SK-N-SH (cell line): ENCODE measurements at regions of chr6 and their contacts with region 1.

Region 1: DNA sequence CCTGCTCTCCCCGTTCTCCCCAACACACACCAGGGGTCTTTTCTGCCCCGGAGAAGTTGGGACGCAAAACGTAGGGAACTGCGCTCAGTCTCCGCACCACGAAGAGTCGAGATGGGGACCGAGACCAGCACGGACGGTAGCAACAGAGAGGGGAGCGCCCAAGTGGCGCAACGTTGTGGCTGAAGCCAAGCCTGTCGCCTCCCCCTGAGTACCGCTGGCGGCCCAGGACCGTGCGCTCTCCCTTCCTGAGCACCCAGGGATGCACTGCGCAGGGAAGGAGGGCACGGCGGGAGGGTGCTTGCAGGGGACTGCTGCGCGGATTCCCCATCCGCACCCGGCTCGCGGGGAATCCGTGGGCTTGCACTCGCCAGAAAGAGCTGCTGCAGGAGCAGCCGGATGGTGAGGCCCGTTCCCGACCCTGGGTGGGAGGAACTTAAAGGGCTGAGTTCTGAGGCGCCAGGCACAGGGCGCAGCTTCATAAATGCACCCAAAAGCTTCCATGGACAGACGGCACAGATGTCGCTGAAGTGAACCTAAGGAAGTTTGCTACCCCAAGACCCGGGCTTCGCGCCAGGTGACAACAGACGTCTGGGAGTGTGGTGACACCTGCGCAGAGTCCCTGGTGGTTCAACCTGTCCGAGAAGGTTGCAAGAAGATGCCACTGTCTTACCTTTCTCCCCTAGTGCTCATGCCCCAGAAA is 178.7 kb downstream of the TBXT start:
- DNase-seq: peak; percentile 63
- H3K4me3 ChIP-seq: peak overlapping the region in 1 of 2 experiments; percentile 37; a peak in 1 of 4 replicates
- H3K27ac ChIP-seq: peak overlapping the region in 1 of 2 experiments; percentile 28; a peak in 1 of 4 replicates
- H3K4me1 ChIP-seq: peaks cover 0 to 11% of the 10 kb centered on the region in 2 experiments; a peak in 1 of 4 replicates
- H3K27me3 ChIP-seq: no peaks in the 10 kb centered on the region
- CTCF ChIP-seq: no peak
- EP300 ChIP-seq: no peak
- RAD21 ChIP-seq: no peak

Region 2: GRCh38 chr6:166008441-166009369 is 19.8 kb after region 1 on chr6:
- CTCF ChIA-PET with region 1: interaction called, 14 read pairs
- POLR2A ChIA-PET with region 1: no interaction called
- DNase-seq: peak; percentile 75
- H3K4me3 ChIP-seq: peak overlapping the region; percentile 41; a peak in 2 of 4 replicates
- H3K27ac ChIP-seq: peak overlapping the region in 1 of 2 experiments; percentile 24; a peak in 1 of 4 replicates
- H3K4me1 ChIP-seq: peaks cover 0 to 38% of the 10 kb centered on the region in 2 experiments; a peak in 2 of 4 replicates
- H3K27me3 ChIP-seq: no peaks in the 10 kb centered on the region; the same call in 1 of the 2 replicates
- CTCF ChIP-seq: no peak
- EP300 ChIP-seq: no peak
- RAD21 ChIP-seq: no peak; the same call in 1 of the 2 replicates

Region 3: GRCh38 chr6:166045173-166045859 is 56.4 kb after region 1 on chr6:
- CTCF ChIA-PET with region 1: no interaction called
- POLR2A ChIA-PET with region 1: no interaction called
- DNase-seq: no peak
- H3K4me3 ChIP-seq: no peak overlapping the region
- H3K27ac ChIP-seq: no peak overlapping the region
- H3K4me1 ChIP-seq: no peaks in the 10 kb centered on the region
- H3K27me3 ChIP-seq: no peaks in the 10 kb centered on the region
- CTCF ChIP-seq: no peak
- EP300 ChIP-seq: no peak
- RAD21 ChIP-seq: no peak